Calu3 (cell line): ENCODE measurements at regions of chr7 and their contacts with region 1.

Region 1: DNA sequence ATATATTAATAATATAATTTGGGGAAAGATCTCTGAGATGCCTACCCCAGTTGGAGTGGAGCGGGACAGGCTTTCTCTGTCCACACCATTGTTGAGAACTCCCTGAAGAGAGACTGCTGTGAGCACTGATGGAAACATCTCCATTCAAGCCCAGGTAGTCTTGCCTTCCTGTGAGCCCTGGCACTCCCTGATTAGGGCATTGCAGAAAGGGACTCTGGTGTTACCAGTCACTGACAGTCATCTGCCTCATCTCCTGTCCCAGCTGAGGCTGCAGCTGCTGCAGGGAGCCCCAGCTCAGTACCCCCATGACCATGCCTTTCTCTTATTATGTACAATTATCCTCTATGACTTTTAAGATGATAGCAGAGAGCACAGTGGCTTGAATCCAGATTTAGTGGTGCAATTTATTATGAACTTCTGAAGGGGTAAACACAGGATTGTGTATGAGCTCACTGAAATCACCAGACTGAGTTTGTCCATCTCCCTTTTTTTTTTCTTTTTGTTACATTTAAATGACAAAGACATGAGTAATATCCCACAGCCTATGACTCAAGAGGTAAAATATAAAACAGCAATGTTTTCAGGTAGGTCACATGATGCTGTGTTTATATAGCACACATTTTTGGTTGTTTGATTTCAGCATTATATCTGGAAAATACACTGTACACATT is 236.9 kb downstream of the SLC25A13 start:
- DNase-seq: peak; percentile 9
- H3K4me3 Mint-ChIP-seq: peak overlapping the region; percentile 33
- H3K27ac Mint-ChIP-seq: peak overlapping the region; percentile 73
- H3K4me1 Mint-ChIP-seq: peaks cover 23% of the 10 kb centered on the region
- H3K27me3 Mint-ChIP-seq: no peaks in the 10 kb centered on the region
- CTCF ChIP-seq: no peak

Region 2: GRCh38 chr7:95611224-95611623 is 473.8 kb before region 1 on chr7:
- CTCF ChIA-PET with region 1: no interaction called
- intact Hi-C with region 1: no loop called
- DNase-seq: no peak
- H3K4me3 Mint-ChIP-seq: no peak overlapping the region
- H3K27ac Mint-ChIP-seq: peak overlapping the region; percentile 33
- H3K4me1 Mint-ChIP-seq: peaks cover 37% of the 10 kb centered on the region
- H3K27me3 Mint-ChIP-seq: no peaks in the 10 kb centered on the region
- CTCF ChIP-seq: no peak

Region 3: DNA sequence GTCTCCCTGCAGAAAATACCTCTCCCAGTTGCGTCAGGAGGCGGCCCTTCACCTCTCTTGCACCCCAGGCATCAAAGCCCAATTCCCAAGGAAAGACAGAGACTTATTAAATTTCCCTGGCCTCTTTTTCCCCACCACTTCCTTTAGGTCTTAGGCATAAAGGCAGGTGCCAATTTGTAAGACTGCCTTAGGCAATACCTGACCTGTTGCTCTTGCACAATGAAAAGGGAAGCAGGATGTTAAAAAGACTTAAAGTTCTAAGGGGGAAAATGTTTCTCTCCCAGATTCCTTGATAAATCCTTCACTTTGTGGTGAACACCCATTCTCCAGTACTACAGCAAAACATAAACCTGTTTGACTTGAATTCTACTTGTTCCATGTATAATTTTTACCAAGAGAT is 50.3 kb after region 1 on chr7:
- CTCF ChIA-PET with region 1: no interaction called
- intact Hi-C with region 1: loop called (anchors 2 kb)
- DNase-seq: peak; percentile 32
- H3K4me3 Mint-ChIP-seq: peak overlapping the region; percentile 32
- H3K27ac Mint-ChIP-seq: peak overlapping the region; percentile 85
- H3K4me1 Mint-ChIP-seq: peaks cover 21% of the 10 kb centered on the region
- H3K27me3 Mint-ChIP-seq: no peaks in the 10 kb centered on the region
- CTCF ChIP-seq: no peak

Region 4: GRCh38 chr7:96311967-96312366 is 227.0 kb after region 1 on chr7:
- CTCF ChIA-PET with region 1: no interaction called
- intact Hi-C with region 1: loop called (anchors 10 kb)
- DNase-seq: no peak
- H3K4me3 Mint-ChIP-seq: no peak overlapping the region
- H3K27ac Mint-ChIP-seq: no peak overlapping the region
- H3K4me1 Mint-ChIP-seq: peaks cover 26% of the 10 kb centered on the region
- H3K27me3 Mint-ChIP-seq: no peaks in the 10 kb centered on the region
- CTCF ChIP-seq: no peak